HCT116 (cell line): ENCODE measurements at regions of chr12 and their contacts with region 1.

Region 1: GRCh38 chr12:85424581-85425348 is 144.7 kb downstream of the ALX1 start:
- DNase-seq: peak; percentile 21
- ATAC-seq: peak; percentile 49; the same call in 1 of the 2 replicates
- H3K4me3 ChIP-seq: no peak overlapping the region
- H3K27ac ChIP-seq: no peak overlapping the region
- H3K4me1 ChIP-seq: no peaks in the 10 kb centered on the region
- H3K27me3 ChIP-seq: no peaks in the 10 kb centered on the region
- CTCF ChIP-seq: peak; percentile 36 to 66 (median 47); a peak in 5 of 6 replicates
- POLR2A ChIP-seq: no peak
- RAD21 ChIP-seq: peak; percentile 58

Region 2: DNA sequence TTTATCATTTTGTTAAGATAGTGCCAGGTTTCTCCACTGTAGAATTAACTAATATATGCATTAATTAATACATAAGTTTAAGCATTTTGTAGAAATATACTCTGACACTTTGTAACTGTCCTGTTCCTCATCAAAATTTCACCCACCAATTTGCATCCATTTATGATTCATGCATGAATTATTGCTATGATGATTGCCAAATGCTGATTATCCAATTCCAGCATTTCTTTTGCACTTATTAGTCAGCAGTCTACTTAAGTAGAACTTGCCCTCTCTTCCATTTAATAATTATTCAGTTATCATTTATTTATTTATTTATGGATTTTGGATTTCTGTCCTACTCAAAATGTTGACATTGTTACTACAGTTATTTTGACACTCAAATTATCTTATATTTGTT is 584.4 kb before region 1 on chr12:
- CTCF ChIA-PET with region 1: no interaction called
- POLR2A ChIA-PET with region 1: no interaction called
- RAD21 ChIA-PET with region 1: no interaction called
- intact Hi-C with region 1: no loop called
- DNase-seq: no peak
- ATAC-seq: no peak
- H3K4me3 ChIP-seq: no peak overlapping the region
- H3K27ac ChIP-seq: no peak overlapping the region
- H3K4me1 ChIP-seq: no peaks in the 10 kb centered on the region
- H3K27me3 ChIP-seq: no peaks in the 10 kb centered on the region
- CTCF ChIP-seq: no peak
- POLR2A ChIP-seq: no peak
- RAD21 ChIP-seq: no peak

Region 3: GRCh38 chr12:85765443-85765842 is 340.7 kb after region 1 on chr12:
- CTCF ChIA-PET with region 1: no interaction called
- POLR2A ChIA-PET with region 1: no interaction called
- RAD21 ChIA-PET with region 1: no interaction called
- intact Hi-C with region 1: no loop called
- DNase-seq: no peak
- ATAC-seq: no peak
- H3K4me3 ChIP-seq: no peak overlapping the region
- H3K27ac ChIP-seq: no peak overlapping the region
- H3K4me1 ChIP-seq: no peaks in the 10 kb centered on the region
- H3K27me3 ChIP-seq: no peaks in the 10 kb centered on the region
- CTCF ChIP-seq: no peak
- POLR2A ChIP-seq: no peak
- RAD21 ChIP-seq: no peak

Region 4: DNA sequence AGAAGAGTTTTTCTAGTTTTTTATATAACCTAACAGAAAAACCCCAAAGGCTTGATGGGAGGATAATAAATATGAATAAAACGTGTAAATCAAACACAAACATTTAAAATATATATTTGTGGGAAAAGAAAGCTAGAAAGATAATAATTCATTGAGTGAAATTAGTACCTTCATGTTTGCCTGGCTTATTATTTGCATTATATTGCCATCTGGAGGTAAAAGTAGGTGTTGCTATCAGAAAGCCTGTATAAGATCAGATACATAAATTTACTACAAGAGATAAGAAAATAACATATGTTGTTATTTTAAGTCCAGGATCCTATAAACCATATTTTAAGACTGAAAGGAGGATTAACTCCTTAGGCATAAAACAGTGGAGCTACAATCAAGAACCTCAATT is 527.1 kb after region 1 on chr12:
- CTCF ChIA-PET with region 1: interaction called, 14 read pairs
- POLR2A ChIA-PET with region 1: no interaction called
- RAD21 ChIA-PET with region 1: no interaction called
- intact Hi-C with region 1: no loop called
- DNase-seq: peak; percentile 19
- ATAC-seq: no peak
- H3K4me3 ChIP-seq: no peak overlapping the region
- H3K27ac ChIP-seq: no peak overlapping the region
- H3K4me1 ChIP-seq: no peaks in the 10 kb centered on the region
- H3K27me3 ChIP-seq: no peaks in the 10 kb centered on the region
- CTCF ChIP-seq: peak; percentile 34 to 64 (median 40); a peak in 4 of 6 replicates
- POLR2A ChIP-seq: no peak
- RAD21 ChIP-seq: peak; percentile 65